Heart left ventricle (tissue), 16 donors: ENCODE measurements at regions of chr22 and their contacts with region 1.

Region 1: GRCh38 chr22:41479671-41480396 is 10.9 kb downstream of the ACO2 start:
- DNase-seq: no peak
- ATAC-seq: peak in 3 of 4 donors; percentile 13 to 41 (median 30)
- H3K4me3 ChIP-seq: no peak overlapping the region
- H3K27ac ChIP-seq: peak overlapping the region in 11 of 12 donors; percentile 34 to 83 (median 73)
- H3K4me1 ChIP-seq: peaks cover 5 to 92% (median 63%) of the 10 kb centered on the region in 12 donors
- H3K27me3 ChIP-seq: no peaks in the 10 kb centered on the region
- CTCF ChIP-seq: no peak
- POLR2A ChIP-seq: no peak

Region 2: GRCh38 chr22:41517172-41518047 is 37.6 kb after region 1 on chr22:
- intact Hi-C with region 1: loop called in 2 of 10 experiments (anchors 5 kb)
- DNase-seq: peak in 3 of 5 donors; percentile 63 to 74 (median 70)
- ATAC-seq: peak in 3 of 4 donors; percentile 37 to 40 (median 38)
- H3K4me3 ChIP-seq: no peak overlapping the region
- H3K27ac ChIP-seq: peak overlapping the region in 9 of 12 donors; percentile 16 to 89 (median 54)
- H3K4me1 ChIP-seq: peaks cover 0 to 48% (median 18%) of the 10 kb centered on the region in 12 donors
- H3K27me3 ChIP-seq: no peaks in the 10 kb centered on the region
- CTCF ChIP-seq: peak; percentile 81 to 93 (median 88)
- POLR2A ChIP-seq: no peak

Region 3: GRCh38 chr22:41526837-41527799 is 47.3 kb after region 1 on chr22:
- intact Hi-C with region 1: loop called in 1 of 10 experiments (anchors 5 kb)
- DNase-seq: peak in 1 of 5 donors; percentile 50
- ATAC-seq: peak in 1 of 4 donors; percentile 22
- H3K4me3 ChIP-seq: no peak overlapping the region
- H3K27ac ChIP-seq: peak overlapping the region in 10 of 12 donors; percentile 77 to 93 (median 89)
- H3K4me1 ChIP-seq: peaks cover 7 to 66% (median 46%) of the 10 kb centered on the region in 12 donors
- H3K27me3 ChIP-seq: no peaks in the 10 kb centered on the region
- CTCF ChIP-seq: peak; percentile 73 to 86 (median 79)
- POLR2A ChIP-seq: no peak